Endothelial cell of umbilical vein (primary cell): ENCODE measurements at regions of chr19 and their contacts with region 1.

Region 1: DNA sequence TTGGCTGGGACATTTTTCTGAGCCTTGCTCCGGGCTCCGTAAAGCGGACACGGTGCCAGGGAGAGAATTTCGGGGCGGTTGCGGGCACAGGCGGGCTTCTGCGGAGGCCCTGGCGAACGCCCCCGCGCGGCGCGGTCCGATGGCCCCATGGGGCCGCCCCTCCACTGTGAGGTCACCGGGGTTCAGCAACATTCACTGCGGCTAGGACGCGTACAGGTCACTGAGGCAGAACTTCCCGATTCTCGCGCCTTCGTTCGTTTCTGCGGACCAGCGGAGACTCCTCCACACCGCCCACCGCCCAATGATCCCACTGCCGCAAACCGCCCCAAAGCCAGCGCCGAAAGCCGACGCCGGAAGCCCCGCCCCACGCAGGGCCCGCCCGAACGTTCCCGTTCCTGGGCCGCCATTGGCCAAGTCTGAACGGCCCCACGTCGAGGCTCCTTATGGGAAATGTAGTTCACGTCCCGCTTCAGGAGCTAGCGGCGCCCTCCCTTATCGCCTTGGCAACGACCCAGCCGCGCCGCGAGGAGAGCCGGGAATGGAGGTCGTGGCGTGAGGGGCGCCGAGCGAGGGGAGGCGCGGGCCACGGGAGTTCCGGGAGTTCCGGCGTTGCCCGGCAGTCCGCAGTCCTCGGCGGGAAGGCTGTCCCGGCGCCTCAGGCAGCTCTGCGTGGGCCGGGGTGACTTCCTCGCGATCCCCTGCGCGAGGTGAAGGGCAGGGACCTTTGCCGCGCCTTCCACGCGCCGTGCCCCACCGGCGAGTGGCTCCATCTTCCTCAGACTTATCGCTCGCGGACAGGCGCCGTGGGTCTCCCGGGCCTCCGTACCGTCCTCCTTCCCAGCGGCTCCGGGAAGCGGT is at the start of gene ZNF584:
- DNase-seq: peak; percentile 94
- H3K4me3 ChIP-seq: peak within 1 kb of the TSS; percentile 51 to 93 (median 66)
- H3K27ac ChIP-seq: peak within 1 kb of the TSS; percentile 27
- H3K4me1 ChIP-seq: peaks cover 15% of the 10 kb centered on the region
- H3K27me3 ChIP-seq: no peaks in the 10 kb centered on the region
- CTCF ChIP-seq: peak in 1 of 2 donors; percentile 33
- POLR2A ChIP-seq: peak; percentile 97
- total RNA-seq, gene ZNF584: 12.4 and 12.6 TPM in 2 replicates

Region 2: DNA sequence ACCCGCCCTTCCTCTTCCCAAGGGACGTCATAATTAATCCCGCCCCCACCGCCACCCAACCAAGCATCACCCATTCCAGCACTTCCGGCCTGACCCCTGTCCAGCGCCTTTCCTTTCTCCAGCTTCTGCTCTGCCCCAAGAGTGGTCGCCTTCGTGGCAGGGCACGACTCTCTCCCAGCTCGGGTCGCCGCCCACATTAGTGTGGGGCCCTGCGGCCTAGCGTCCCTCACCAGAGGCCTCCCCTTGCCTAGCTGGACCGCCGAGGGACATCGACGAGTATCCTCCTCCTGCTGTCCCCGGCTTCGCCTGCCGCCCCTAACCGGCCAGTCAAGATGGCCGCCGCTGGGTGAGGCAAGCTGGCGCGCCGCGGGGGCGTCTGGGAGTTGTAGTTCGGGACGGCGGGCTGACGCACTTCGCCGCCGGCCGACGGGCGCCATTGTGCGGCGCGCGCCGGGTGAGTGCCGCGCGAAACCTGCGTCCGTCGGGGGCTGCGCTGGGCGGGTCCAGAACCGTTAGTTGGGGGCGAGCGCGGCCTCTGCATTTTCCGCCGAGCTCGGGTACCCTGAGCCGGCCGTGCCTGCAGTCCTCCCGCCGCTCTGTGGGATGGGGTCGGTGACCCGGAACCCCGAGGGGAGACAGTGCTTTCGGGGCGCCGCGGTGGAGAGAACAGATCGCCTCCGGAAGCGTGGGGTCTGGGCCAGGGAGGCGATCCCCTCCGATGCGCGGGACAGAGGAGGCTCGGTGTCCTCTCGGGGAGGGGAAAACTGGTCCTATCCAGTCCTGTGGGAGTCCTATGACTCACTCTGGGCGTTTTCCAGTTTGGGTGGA is 225.2 kb before region 1 on chr19 and contains the start of gene ZNF274:
- CTCF ChIA-PET with region 1: no interaction called
- POLR2A ChIA-PET with region 1: no interaction called
- dilution Hi-C with region 1: no loop called
- intact Hi-C with region 1: loop called (anchors 2 kb)
- DNase-seq: peak; percentile 88
- H3K4me3 ChIP-seq: peak within 1 kb of the TSS; percentile 18 to 98 (median 62)
- H3K27ac ChIP-seq: peak within 1 kb of the TSS; percentile 89
- H3K4me1 ChIP-seq: no peaks in the 10 kb centered on the region
- H3K27me3 ChIP-seq: no peaks in the 10 kb centered on the region
- CTCF ChIP-seq: no peak
- POLR2A ChIP-seq: peak; percentile 7
- total RNA-seq, gene ZNF274: 18.3 and 18.8 TPM in 2 replicates

Region 3: DNA sequence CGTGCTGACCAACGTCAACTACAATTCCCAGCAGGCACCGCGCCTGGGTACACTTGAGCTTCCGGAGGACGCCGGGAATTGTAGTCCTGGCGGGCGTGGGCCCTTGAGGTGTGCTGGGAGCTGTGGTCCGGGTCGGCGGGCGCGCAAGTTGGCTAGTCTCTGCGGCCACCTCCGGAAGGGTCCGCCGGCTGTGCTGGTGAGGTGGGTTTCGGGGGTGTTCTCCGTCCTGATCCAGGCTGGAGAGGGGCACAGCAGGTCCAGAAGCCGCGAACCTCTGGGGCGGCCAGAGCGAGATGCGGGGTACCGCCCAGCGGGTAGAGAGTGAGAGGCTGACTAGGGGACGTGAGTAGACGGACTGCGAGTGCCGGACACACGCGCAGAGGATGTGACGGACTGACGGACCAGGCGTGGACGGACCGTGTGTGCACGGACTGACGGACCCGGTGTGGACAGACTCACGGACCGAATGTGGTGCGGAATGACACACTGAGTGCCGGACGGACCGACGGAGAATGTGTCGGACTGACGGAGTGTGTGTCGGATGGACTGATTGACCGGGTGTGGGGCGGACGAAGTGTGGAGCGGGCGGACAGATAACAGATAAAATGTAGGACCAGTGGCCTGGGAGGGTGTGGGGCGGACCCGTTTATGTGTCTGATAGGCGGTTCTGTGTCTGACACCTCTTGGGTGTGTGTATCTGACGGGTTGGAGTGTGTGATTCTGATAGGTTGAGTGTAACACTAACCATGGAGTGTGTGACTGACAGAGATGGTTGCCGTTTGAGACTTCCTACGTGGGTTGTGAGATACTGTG is 81.3 kb before region 1 on chr19 and contains the start of gene ZSCAN22:
- CTCF ChIA-PET with region 1: no interaction called
- POLR2A ChIA-PET with region 1: no interaction called
- dilution Hi-C with region 1: no loop called
- intact Hi-C with region 1: loop called (anchors 1 kb)
- DNase-seq: peak; percentile 96
- H3K4me3 ChIP-seq: peak within 1 kb of the TSS; percentile 3 to 63 (median 56)
- H3K27ac ChIP-seq: peak within 1 kb of the TSS; percentile 1
- H3K4me1 ChIP-seq: peaks cover 12% of the 10 kb centered on the region
- H3K27me3 ChIP-seq: no peaks in the 10 kb centered on the region
- CTCF ChIP-seq: no peak
- POLR2A ChIP-seq: peak; percentile 76
- total RNA-seq, gene ZSCAN22: 3.6 and 3.7 TPM in 2 replicates

Region 4: DNA sequence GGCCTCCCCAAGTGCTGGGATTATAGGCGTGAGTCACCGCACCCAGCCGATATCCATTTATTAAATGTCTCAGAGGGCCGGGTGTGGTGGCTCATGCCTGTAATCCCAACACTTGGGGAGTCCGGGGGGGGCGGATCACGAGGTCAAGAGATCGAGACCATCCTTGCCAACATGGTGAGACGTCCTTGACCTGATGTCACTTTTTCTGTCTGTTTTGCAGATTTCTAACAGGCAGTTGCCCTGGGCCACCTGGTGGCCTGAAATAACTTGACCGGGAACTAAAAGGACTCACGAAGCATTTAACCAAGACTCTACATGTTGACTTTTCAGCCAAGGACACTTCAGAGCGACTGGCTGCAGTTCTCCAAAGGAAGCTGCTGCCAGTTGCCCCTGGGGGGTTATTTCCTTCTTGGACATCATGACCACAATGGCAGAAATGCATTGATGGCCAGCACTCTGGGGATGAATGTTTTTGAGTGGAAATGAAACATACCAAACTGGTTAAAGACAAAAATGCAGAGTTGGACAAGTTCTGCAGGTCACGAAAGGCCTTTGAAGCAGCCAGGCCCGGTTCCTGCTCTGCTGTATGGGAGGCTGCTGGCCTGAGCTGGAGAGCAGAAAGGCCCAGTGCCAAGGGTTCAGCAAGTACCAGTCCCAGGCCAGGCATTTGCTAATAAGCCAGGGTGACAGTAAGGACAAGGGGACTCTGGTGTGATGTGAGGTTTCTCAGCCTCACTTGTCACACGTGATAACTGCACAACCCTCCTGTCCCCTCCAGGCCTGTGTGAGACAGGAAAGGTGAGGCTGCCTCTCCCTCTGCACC is 35.9 kb before region 1 on chr19:
- CTCF ChIA-PET with region 1: no interaction called
- POLR2A ChIA-PET with region 1: no interaction called
- dilution Hi-C with region 1: no loop called
- intact Hi-C with region 1: no loop called
- DNase-seq: no peak
- H3K4me3 ChIP-seq: no peak overlapping the region
- H3K27ac ChIP-seq: no peak overlapping the region
- H3K4me1 ChIP-seq: no peaks in the 10 kb centered on the region
- H3K27me3 ChIP-seq: peaks cover 6 to 19% of the 10 kb centered on the region in 2 experiments
- CTCF ChIP-seq: peak in 1 of 2 donors; percentile 8
- POLR2A ChIP-seq: no peak

Region 5: DNA sequence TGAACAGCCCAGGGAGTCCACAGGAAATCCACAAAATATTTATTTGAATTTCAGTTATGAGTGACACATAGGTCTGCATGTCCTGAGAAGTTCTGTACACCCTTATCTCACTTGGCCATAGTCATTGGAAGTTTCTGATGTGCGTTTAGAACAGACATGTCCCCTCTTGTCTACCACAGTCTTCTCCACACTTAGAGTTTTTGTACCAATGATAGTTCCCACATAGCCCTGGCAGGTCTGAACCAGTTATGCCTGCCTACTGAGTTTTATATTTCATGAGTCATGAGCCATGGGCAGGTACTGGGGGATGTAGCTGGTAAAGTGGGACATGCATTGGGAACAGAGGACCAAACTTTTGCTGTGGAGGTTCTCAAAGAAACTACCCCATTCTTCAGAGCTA is 20.2 kb after region 1 on chr19:
- CTCF ChIA-PET with region 1: interaction called, 4 read pairs
- POLR2A ChIA-PET with region 1: interaction called, 11 read pairs
- dilution Hi-C with region 1: no loop called
- intact Hi-C with region 1: no loop called
- DNase-seq: no peak
- H3K4me3 ChIP-seq: no peak overlapping the region
- H3K27ac ChIP-seq: no peak overlapping the region
- H3K4me1 ChIP-seq: no peaks in the 10 kb centered on the region
- H3K27me3 ChIP-seq: no peaks in the 10 kb centered on the region
- CTCF ChIP-seq: no peak
- POLR2A ChIP-seq: no peak

Region 6: GRCh38 chr19:58451358-58452101 is 43.1 kb after region 1 on chr19 and contains the start of gene ZNF324B:
- CTCF ChIA-PET with region 1: no interaction called
- POLR2A ChIA-PET with region 1: no interaction called
- dilution Hi-C with region 1: no loop called
- intact Hi-C with region 1: loop called (anchors 1 kb)
- DNase-seq: peak; percentile 95
- H3K4me3 ChIP-seq: peak within 1 kb of the TSS; percentile 33 to 81 (median 62)
- H3K27ac ChIP-seq: peak within 1 kb of the TSS; percentile 18
- H3K4me1 ChIP-seq: peaks cover 3% of the 10 kb centered on the region
- H3K27me3 ChIP-seq: no peaks in the 10 kb centered on the region
- CTCF ChIP-seq: no peak
- POLR2A ChIP-seq: peak; percentile 57
- total RNA-seq, gene ZNF324B: 6.3 and 6.9 TPM in 2 replicates

Region 7: DNA sequence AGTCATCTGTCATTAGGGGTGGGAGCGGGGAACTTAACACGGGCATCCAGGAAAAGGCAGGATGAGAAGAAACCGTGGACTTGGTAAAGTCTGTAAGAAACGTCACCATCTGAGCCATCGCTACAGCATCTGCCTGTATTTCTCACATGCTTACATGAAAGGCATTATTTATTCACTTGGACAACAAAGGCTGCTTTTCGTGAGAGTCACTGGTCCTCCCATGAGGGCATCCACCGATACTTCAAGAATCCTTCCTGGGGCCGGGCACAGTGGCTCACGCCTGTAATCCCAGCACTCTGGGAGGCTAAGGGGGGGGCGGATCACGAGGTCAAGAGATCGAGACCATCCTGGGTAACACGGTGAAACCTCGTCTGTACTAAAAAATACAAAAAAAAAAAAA is 83.9 kb after region 1 on chr19:
- CTCF ChIA-PET with region 1: no interaction called
- POLR2A ChIA-PET with region 1: no interaction called
- dilution Hi-C with region 1: no loop called
- intact Hi-C with region 1: no loop called
- DNase-seq: no peak
- H3K4me3 ChIP-seq: no peak overlapping the region
- H3K27ac ChIP-seq: no peak overlapping the region
- H3K4me1 ChIP-seq: no peaks in the 10 kb centered on the region
- H3K27me3 ChIP-seq: no peaks in the 10 kb centered on the region
- CTCF ChIP-seq: no peak
- POLR2A ChIP-seq: no peak

Region 8: DNA sequence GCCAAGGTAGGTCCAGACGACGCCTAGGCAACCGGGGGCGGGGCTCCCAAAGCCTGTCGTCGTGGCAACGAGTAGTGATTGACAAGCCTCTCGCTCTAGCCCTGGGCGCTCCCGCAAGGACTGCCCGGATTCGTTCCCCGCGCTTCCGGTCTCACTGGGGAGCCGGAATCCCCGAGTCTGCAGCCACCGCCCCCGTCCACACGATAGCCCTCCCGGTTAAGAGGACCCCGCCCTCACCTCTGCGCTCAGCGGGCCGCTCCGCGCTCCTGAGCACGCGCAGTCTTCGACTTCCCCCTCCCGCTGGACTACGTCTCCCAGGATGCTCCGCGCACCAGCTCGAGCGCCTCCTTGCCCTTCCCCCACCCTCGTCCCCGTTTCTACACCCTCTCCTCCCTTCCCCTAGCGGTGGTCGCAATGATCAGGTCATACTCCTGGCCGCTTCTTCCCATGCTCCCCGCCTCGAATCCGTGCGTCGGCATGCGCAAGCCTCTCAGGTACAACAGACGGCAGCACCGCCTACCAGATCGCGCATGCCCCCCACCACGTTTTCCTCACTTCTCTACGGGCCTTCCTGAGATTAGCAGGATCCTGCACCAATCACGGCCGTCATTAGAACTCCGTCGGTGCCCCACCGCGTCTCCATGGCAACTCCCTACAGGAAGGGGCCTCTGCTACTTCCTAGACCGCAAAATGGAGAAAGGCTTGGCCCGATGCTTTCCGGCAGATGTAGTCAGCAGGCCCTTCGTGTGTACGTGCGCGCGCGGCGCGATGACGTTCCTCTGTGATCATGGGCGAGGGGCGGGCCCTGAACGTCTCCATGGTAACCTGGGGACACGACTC is 164.7 kb after region 1 on chr19 and contains the start of gene MZF1:
- CTCF ChIA-PET with region 1: interaction called, 3 read pairs
- POLR2A ChIA-PET with region 1: no interaction called
- dilution Hi-C with region 1: no loop called
- intact Hi-C with region 1: loop called (anchors 1 kb)
- DNase-seq: peak; percentile 100
- H3K4me3 ChIP-seq: peak within 1 kb of the TSS; percentile 7 to 70 (median 58)
- H3K27ac ChIP-seq: peak within 1 kb of the TSS; percentile 85
- H3K4me1 ChIP-seq: peaks cover 16% of the 10 kb centered on the region
- H3K27me3 ChIP-seq: no peaks in the 10 kb centered on the region
- CTCF ChIP-seq: peak; percentile 6 to 23
- POLR2A ChIP-seq: no peak
- total RNA-seq, gene MZF1: 18.8 and 26.4 TPM in 2 replicates